ENCODE measurements at regions of chrX and their contacts with region 1.

Region 1: DNA sequence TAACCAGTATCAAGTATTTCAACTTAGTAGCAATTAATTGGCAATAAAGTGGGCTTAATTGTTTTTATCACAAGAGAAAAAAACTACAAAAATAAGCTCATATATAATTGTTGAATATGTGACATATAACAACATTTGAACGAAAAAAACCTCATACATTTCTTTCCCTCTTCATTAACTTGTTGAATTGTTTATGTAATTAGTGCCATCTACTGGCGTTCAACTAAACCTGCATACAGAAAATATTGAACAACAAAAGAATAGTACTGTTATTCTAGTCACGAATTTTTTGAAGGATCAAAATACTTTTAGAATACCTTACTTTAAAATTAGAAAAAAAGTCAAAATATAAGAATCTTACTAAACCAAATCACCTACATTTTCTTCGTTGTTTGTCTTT is 586.5 kb upstream of the FTHL17 start:
- DNase-seq: peak in 3 of 4 experiments; percentile 4 to 8 (median 7)
- ATAC-seq: no peak; the same call in 2 of the 3 replicates
- H3K4me3 ChIP-seq: no peak overlapping the region
- H3K27ac ChIP-seq: no peak overlapping the region
- H3K4me1 ChIP-seq: no peaks in the 10 kb centered on the region; a peak in 1 of 5 replicates
- H3K27me3 ChIP-seq: no peaks in the 10 kb centered on the region
- CTCF ChIP-seq: peak; percentile 6 to 58 (median 19); a peak in 3 of 6 replicates
- EP300 ChIP-seq: no peak
- POLR2A ChIP-seq: no peak
- RAD21 ChIP-seq: peak; percentile 65 to 67

Region 2: GRCh38 chrX:30735839-30736238 is 922.5 kb before region 1 on chrX:
- CTCF ChIA-PET with region 1: interaction called, 3 read pairs
- POLR2A ChIA-PET with region 1: no interaction called
- in situ Hi-C with region 1: no loop called
- intact Hi-C with region 1: loop called (anchors 5 kb)
- DNase-seq: peak; percentile 44 to 76 (median 46)
- ATAC-seq: peak; percentile 91
- H3K4me3 ChIP-seq: no peak overlapping the region
- H3K27ac ChIP-seq: no peak overlapping the region
- H3K4me1 ChIP-seq: no peaks in the 10 kb centered on the region
- H3K27me3 ChIP-seq: no peaks in the 10 kb centered on the region
- CTCF ChIP-seq: peak; percentile 65 to 86 (median 78)
- EP300 ChIP-seq: no peak
- POLR2A ChIP-seq: no peak
- RAD21 ChIP-seq: peak; percentile 53 to 80

Region 3: GRCh38 chrX:31213941-31214340 is 444.4 kb before region 1 on chrX:
- CTCF ChIA-PET with region 1: no interaction called
- POLR2A ChIA-PET with region 1: no interaction called
- in situ Hi-C with region 1: no loop called
- intact Hi-C with region 1: loop called (anchors 1 kb)
- DNase-seq: peak; percentile 5 to 17 (median 9)
- ATAC-seq: peak; percentile 67
- H3K4me3 ChIP-seq: no peak overlapping the region
- H3K27ac ChIP-seq: no peak overlapping the region
- H3K4me1 ChIP-seq: no peaks in the 10 kb centered on the region
- H3K27me3 ChIP-seq: no peaks in the 10 kb centered on the region
- CTCF ChIP-seq: peak; percentile 45 to 61 (median 51)
- EP300 ChIP-seq: no peak
- POLR2A ChIP-seq: no peak
- RAD21 ChIP-seq: peak; percentile 46 to 64

Region 4: GRCh38 chrX:31279359-31279758 is 379.0 kb before region 1 on chrX:
- CTCF ChIA-PET with region 1: interaction called, 4 read pairs
- POLR2A ChIA-PET with region 1: no interaction called
- in situ Hi-C with region 1: no loop called
- intact Hi-C with region 1: loop called (anchors 2 kb)
- DNase-seq: peak in 3 of 4 experiments; percentile 10 to 37 (median 27)
- ATAC-seq: peak; percentile 85
- H3K4me3 ChIP-seq: no peak overlapping the region
- H3K27ac ChIP-seq: no peak overlapping the region
- H3K4me1 ChIP-seq: no peaks in the 10 kb centered on the region
- H3K27me3 ChIP-seq: no peaks in the 10 kb centered on the region
- CTCF ChIP-seq: peak in 2 of 3 experiments; percentile 40 to 47; a peak in 3 of 6 replicates
- EP300 ChIP-seq: no peak
- POLR2A ChIP-seq: no peak
- RAD21 ChIP-seq: peak; percentile 41 to 67

Measured in K562 (cell line).